Prostate gland (tissue), 2 donors: ENCODE measurements at regions of chr1 and their contacts with region 1.

Region 1: DNA sequence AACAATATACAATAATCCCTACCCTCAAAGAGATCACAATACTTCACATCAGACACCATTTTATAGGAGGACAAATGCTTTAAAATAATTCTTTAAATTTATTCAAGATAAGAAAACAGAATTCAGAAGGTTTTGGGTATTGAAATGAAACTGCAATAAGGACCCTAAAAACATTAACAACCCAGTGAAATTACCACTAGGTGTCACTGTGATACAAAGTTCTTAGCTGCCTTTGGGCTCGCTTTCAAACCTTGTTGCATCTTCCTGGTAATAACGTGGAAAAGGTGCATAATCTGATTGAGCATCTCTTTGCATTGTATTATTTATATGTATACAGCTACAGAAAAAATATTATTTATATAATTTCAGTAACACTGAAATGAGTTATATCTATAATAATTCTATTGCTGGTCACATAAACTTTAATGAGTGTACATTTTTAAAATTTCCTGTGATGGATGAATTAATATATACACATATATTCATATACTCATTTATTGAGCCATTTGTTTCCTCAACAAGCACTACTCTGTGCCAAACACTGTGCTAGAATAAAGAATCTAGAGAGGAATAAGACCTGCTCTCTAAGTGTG is 185.2 kb downstream of the FAF1 start:
- DNase-seq: peak; percentile 21
- H3K4me3 ChIP-seq: no peak overlapping the region
- H3K27ac ChIP-seq: no peak overlapping the region
- H3K4me1 ChIP-seq: no peaks in the 10 kb centered on the region
- H3K27me3 ChIP-seq: no peaks in the 10 kb centered on the region
- CTCF ChIP-seq: peak in 3 of 4 experiments; percentile 59 to 70 (median 69)
- POLR2A ChIP-seq: no peak

Region 2: GRCh38 chr1:50808296-50808695 is 33.4 kb after region 1 on chr1:
- intact Hi-C with region 1: no loop called
- DNase-seq: no peak
- H3K4me3 ChIP-seq: no peak overlapping the region
- H3K27ac ChIP-seq: no peak overlapping the region
- H3K4me1 ChIP-seq: no peaks in the 10 kb centered on the region
- H3K27me3 ChIP-seq: no peaks in the 10 kb centered on the region
- CTCF ChIP-seq: no peak
- POLR2A ChIP-seq: no peak

Region 3: DNA sequence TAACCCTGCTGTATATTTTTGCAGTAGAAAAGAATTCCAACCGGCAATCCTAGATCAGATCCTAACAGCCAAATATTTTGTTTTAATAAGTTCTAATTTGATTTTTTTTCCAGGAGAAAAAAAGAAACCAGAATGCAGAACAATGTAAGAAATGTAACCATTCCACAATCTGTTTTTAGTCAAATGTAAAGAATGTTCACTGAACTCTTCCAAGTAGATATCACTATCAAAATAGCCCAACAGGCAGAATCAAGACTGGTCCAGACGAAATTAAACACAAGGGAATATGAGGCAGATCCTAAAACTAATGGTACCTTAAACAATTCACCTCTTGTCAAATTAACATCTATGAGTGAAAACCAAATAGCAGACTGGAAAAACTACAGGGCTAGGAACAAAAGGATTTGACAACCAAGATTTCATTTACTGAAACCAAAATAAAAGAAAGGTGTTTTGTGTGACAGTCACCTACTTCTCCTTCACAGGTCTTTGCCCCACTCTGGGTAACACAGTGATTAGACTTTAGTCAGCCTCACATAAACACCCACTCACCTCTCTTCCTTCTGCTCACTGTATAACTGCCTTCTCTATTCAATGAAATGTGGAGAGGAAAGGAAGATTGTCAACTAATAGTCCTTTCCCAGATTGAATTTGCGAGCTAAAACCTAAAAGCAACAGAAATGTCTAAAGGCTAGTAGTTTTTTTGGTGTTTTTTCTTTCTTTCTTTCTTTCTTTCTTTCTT is 47.4 kb after region 1 on chr1:
- intact Hi-C with region 1: no loop called
- DNase-seq: no peak
- H3K4me3 ChIP-seq: no peak overlapping the region
- H3K27ac ChIP-seq: no peak overlapping the region
- H3K4me1 ChIP-seq: no peaks in the 10 kb centered on the region
- H3K27me3 ChIP-seq: no peaks in the 10 kb centered on the region
- CTCF ChIP-seq: no peak
- POLR2A ChIP-seq: no peak

Region 4: GRCh38 chr1:51044834-51045233 is 270.0 kb after region 1 on chr1:
- intact Hi-C with region 1: loop called (anchors 10 kb)
- DNase-seq: no peak
- H3K4me3 ChIP-seq: no peak overlapping the region
- H3K27ac ChIP-seq: no peak overlapping the region
- H3K4me1 ChIP-seq: no peaks in the 10 kb centered on the region
- H3K27me3 ChIP-seq: no peaks in the 10 kb centered on the region
- CTCF ChIP-seq: peak in 3 of 4 experiments; percentile 5 to 26 (median 21)
- POLR2A ChIP-seq: no peak

Region 5: GRCh38 chr1:51192213-51192843 is 417.5 kb after region 1 on chr1:
- intact Hi-C with region 1: loop called (anchors 5 kb)
- DNase-seq: peak; percentile 57
- H3K4me3 ChIP-seq: no peak overlapping the region
- H3K27ac ChIP-seq: no peak overlapping the region
- H3K4me1 ChIP-seq: no peaks in the 10 kb centered on the region
- H3K27me3 ChIP-seq: no peaks in the 10 kb centered on the region
- CTCF ChIP-seq: peak; percentile 31 to 60 (median 56)
- POLR2A ChIP-seq: no peak

Region 6: GRCh38 chr1:51482881-51483280 is 708.0 kb after region 1 on chr1:
- intact Hi-C with region 1: no loop called
- DNase-seq: no peak
- H3K4me3 ChIP-seq: no peak overlapping the region
- H3K27ac ChIP-seq: no peak overlapping the region
- H3K4me1 ChIP-seq: no peaks in the 10 kb centered on the region
- H3K27me3 ChIP-seq: no peaks in the 10 kb centered on the region
- CTCF ChIP-seq: no peak
- POLR2A ChIP-seq: no peak

Region 7: GRCh38 chr1:51784997-51785421 is 1010.2 kb after region 1 on chr1:
- intact Hi-C with region 1: no loop called
- DNase-seq: no peak
- H3K4me3 ChIP-seq: no peak overlapping the region
- H3K27ac ChIP-seq: no peak overlapping the region
- H3K4me1 ChIP-seq: no peaks in the 10 kb centered on the region
- H3K27me3 ChIP-seq: no peaks in the 10 kb centered on the region
- CTCF ChIP-seq: no peak
- POLR2A ChIP-seq: no peak